CD8-positive, alpha-beta T cell (primary cell): ENCODE measurements at regions of chr13 and their contacts with region 1.

Region 1: DNA sequence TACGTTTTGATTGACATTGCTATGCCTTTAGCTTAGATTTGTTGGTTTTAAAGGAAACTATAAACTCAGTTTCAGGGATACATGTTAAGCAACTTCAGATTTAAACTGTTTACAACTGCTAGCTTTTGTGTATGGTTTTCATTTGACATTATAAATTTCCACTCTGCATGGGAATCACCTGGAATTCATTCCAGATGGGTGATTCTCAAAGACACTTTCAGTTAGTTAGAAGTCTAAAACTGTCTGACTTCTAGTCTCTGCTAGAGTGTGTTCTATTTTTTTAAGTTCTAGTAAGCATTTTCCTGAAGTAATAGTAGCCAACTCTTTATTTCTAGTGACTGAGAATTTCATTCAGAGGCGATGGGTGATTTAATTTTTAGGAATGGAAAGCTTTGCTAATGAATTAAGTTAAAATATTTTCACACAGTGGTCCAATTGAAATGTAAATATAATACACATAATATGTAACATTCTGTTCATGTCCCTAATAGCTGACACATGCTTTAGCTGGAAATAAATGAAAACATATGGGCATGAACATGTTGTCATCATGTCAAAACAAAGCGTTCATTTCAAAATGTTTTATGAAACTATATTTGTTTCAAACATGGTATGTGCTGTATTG is 58.3 kb upstream of the CSNK1A1L start:
- DNase-seq: no peak
- ATAC-seq: no peak
- H3K4me3 ChIP-seq: no peak overlapping the region
- H3K4me3 Mint-ChIP-seq: no peak overlapping the region
- H3K27ac ChIP-seq: no peak overlapping the region
- H3K27ac Mint-ChIP-seq: no peak overlapping the region
- H3K4me1 ChIP-seq: no peaks in the 10 kb centered on the region
- H3K4me1 Mint-ChIP-seq: no peaks in the 10 kb centered on the region
- H3K27me3 ChIP-seq: no peaks in the 10 kb centered on the region
- H3K27me3 Mint-ChIP-seq: no peaks in the 10 kb centered on the region
- CTCF ChIP-seq: no peak

Region 2: DNA sequence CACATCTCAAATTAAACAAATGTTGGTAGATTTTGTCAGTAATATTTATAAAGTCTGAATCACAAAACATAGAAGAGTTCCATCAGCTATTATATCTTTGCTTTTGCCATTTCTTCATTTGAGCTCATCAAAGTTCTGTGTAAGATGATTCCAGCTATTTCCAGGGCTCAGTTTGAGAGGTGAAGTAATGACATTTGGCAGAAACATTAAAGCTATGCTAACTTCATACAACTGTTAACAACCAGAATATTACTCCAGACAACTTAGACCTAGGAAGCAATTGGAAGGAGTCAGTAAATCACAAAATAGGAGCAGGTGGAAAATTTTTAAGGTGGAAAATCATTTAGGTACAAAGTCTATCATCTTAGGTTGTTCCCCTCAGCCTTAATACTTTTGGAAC is 17.9 kb after region 1 on chr13:
- CTCF ChIA-PET with region 1: no interaction called
- POLR2A ChIA-PET with region 1: no interaction called
- intact Hi-C with region 1: loop called in 1 of 2 experiments (anchors 2 kb)
- DNase-seq: no peak
- ATAC-seq: no peak
- H3K4me3 ChIP-seq: no peak overlapping the region
- H3K4me3 Mint-ChIP-seq: no peak overlapping the region
- H3K27ac ChIP-seq: no peak overlapping the region
- H3K27ac Mint-ChIP-seq: no peak overlapping the region
- H3K4me1 ChIP-seq: no peaks in the 10 kb centered on the region
- H3K4me1 Mint-ChIP-seq: no peaks in the 10 kb centered on the region
- H3K27me3 ChIP-seq: peaks cover 0 to 3% of the 10 kb centered on the region in 2 experiments
- H3K27me3 Mint-ChIP-seq: no peaks in the 10 kb centered on the region
- CTCF ChIP-seq: no peak

Region 3: GRCh38 chr13:37348916-37349643 is 185.3 kb after region 1 on chr13:
- CTCF ChIA-PET with region 1: no interaction called
- POLR2A ChIA-PET with region 1: no interaction called
- intact Hi-C with region 1: no loop called
- DNase-seq: no peak
- ATAC-seq: no peak
- H3K4me3 ChIP-seq: no peak overlapping the region
- H3K4me3 Mint-ChIP-seq: no peak overlapping the region
- H3K27ac ChIP-seq: no peak overlapping the region
- H3K27ac Mint-ChIP-seq: no peak overlapping the region
- H3K4me1 ChIP-seq: no peaks in the 10 kb centered on the region
- H3K4me1 Mint-ChIP-seq: no peaks in the 10 kb centered on the region
- H3K27me3 ChIP-seq: no peaks in the 10 kb centered on the region
- H3K27me3 Mint-ChIP-seq: no peaks in the 10 kb centered on the region
- CTCF ChIP-seq: no peak